ENCODE measurements at regions of chr21 and their contacts with region 1.

Region 1: DNA sequence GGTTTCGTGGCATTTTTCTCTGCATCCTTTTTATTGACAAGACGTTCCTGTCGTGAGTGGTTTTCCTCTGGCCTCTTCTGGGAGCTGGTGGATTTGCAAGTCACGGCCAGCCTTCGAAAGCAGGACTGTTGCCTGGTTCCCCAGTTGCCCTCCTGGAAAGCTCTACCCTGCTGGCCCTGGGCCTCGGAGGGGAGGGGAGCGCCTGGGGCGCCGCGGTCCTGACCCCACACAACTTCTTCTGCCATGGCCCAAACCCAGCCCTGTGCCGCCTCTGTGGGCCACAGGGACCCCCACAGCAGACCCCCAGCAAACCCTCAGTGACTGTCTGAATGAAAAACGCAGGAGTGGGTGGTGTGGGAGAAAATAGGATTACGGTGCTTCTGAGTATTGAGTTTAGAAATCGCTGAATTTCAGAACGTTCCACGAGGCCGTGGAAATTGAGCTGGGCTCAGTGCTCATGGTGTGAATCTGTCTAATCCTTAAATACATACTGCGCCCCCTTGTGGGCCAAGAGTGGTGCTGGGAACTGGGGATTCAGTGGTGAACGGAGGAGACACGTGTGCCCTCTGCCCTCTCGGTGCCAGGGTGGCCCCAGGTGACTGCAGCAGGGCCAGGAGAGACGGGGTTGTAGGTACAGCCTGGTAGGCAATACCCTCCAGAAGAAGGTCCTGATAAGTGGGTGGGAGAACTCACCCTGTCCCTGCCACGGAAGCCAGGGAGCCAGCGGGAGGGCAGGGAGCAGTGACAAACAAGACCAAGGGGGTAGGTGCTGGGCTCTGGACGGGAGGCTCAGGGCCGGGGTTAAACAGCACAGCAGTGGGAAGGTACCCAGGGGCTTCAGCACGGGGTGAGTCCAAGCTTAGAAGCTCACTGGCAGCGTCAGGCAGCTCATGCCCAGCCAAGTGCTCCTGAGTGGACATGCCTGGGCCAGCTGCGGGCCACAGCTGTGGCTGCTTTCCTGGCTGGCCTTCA is 101.2 kb upstream of the COL6A1 start:
- DNase-seq: no peak
- H3K4me3 ChIP-seq: no peak overlapping the region
- H3K27me3 ChIP-seq: peaks cover 2% of the 10 kb centered on the region; the same call in 1 of the 2 replicates
- CTCF ChIP-seq: peak; percentile 68

Region 2: GRCh38 chr21:45869121-45870007 is 11.0 kb before region 1 on chr21:
- CTCF ChIA-PET with region 1: interaction called, 24 read pairs
- POLR2A ChIA-PET with region 1: no interaction called
- DNase-seq: no peak
- H3K4me3 ChIP-seq: no peak overlapping the region
- H3K27me3 ChIP-seq: peaks cover 3% of the 10 kb centered on the region
- CTCF ChIP-seq: no peak

Region 3: DNA sequence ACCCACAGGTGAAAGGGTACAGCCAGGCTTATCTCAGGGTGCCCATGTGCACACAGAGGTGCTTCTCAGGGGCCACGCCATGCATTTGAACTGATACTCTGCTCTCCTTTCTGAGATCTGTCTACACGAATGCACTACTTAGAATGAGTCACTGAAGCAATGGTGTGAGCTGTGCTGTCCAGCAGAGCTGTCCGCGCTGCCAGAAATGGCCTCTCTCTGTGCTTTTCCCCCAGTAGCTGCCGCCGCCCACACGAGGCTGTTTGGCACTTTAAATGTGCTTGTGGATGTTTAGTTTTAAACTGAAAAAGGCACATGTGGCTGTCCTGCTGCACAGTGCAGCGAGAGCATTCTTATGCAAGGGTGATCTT is 14.0 kb after region 1 on chr21:
- CTCF ChIA-PET with region 1: interaction called, 12 read pairs
- POLR2A ChIA-PET with region 1: no interaction called
- DNase-seq: peak; percentile 26
- H3K4me3 ChIP-seq: no peak overlapping the region
- H3K27me3 ChIP-seq: peaks cover 11% of the 10 kb centered on the region
- CTCF ChIP-seq: no peak

Region 4: GRCh38 chr21:46210378-46211136 is 330.2 kb after region 1 on chr21:
- CTCF ChIA-PET with region 1: no interaction called
- POLR2A ChIA-PET with region 1: no interaction called
- DNase-seq: no peak
- H3K4me3 ChIP-seq: no peak overlapping the region
- H3K27me3 ChIP-seq: no peaks in the 10 kb centered on the region
- CTCF ChIP-seq: no peak

Region 5: DNA sequence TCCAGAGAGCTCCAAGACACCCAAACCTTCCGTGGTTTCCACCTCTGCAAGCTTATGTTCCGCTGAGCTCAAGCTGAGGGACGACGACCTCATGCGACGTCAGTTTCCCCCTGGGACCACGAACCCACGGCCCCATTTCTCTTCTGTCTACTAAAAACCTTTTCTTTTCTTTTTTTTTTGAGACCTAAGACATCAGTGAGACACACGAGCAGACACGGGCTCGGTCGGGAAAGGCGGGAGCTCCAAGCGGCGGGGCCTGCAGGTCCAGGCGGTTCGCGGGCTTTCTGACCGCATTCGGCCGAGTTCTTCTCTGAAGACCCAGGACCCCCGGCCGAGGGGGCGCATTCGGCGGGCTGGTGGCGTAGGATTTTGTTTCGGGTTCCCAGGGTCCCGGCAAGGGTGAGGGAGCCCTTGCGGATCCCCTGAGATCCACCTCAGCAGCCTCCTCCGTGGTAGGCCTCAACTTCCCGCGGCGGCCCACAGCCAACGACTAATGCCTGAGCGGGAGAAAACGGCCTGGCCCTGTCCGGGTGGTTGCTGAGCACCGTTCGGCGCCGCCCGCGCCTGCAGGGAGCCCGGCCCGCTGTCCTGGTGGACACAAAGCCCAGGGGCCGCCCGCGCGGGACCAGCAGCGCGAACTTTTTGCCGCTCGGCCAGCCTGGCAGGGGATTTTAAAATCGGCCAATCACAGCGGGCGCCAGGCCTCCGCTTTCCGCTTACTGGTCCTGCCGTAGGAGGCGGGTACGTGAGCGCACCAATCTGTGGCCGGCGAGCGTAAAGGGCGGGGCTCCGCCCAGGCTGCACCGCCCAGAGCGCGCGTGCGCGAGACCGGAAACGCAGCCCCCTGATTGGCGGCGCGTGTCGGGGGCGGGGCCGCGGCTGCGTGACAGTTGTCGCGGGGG is 443.1 kb after region 1 on chr21 and contains the start of gene C21orf58:
- CTCF ChIA-PET with region 1: no interaction called
- POLR2A ChIA-PET with region 1: no interaction called
- DNase-seq: peak; percentile 90
- H3K4me3 ChIP-seq: peak within 1 kb of the TSS; percentile 72
- H3K27me3 ChIP-seq: no peaks in the 10 kb centered on the region
- CTCF ChIP-seq: no peak
- polyA plus RNA-seq, gene C21orf58: 2.5 and 4.1 TPM in 2 replicates